WTC11 (cell line): ENCODE measurements at regions of chr17 and their contacts with region 1.

Region 1: DNA sequence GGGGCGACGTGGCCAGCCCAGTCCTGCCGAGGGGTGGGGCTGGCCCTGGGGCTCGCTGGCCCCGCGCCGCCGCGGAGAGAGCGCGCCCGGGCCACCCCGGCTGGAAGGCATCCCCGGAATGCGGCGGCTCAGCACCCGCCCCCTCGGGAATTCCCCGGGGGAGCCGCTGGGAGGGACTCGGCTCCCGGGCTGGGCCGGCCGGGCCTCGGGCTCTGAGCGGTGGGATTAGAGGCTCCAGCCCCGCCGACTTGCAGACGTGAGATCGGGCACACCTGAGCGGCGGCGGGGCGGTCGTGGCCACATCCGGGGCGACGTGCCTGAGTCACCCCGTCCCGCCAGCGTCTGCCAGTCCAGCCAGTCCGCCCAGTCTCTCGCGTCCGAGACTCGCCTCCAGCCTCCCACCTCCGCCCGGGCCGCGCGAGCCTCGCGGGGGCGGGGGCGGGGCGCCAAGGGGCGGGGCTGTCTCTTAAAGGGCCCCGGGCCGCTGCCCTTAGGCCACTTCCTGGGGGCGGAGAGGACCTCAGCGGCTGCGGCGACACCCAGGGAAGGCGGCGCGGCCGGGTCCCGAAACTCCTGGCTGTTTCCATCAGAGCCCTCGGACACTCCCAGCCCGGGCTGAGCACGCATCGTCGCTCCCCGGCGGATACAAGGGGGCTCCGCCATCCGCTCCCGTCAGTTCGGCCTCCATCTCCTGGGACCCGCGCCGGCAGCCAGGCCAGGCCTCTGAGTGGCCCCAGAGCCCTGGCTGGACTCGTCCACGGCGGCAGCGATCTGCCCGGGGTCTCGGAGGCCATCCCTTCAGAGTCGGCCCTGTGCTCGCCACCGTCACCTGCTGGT is at the start of gene KCTD11:
- DNase-seq: peak; percentile 89
- ATAC-seq: peak; percentile 38
- H3K4me3 Mint-ChIP-seq: peak within 1 kb of the TSS; percentile 81
- H3K27ac Mint-ChIP-seq: peak within 1 kb of the TSS; percentile 60; the same call in 1 of the 2 replicates
- H3K4me1 Mint-ChIP-seq: peaks cover 33% of the 10 kb centered on the region
- H3K27me3 Mint-ChIP-seq: peaks cover 7% of the 10 kb centered on the region
- CTCF ChIP-seq: no peak
- total RNA-seq, gene KCTD11: 8.1 to 9.0 TPM (median 8.2 TPM) in 3 replicates

Region 2: GRCh38 chr17:6981426-6981825 is 370.5 kb before region 1 on chr17:
- CTCF ChIA-PET with region 1: no interaction called
- POLR2A ChIA-PET with region 1: no interaction called
- DNase-seq: no peak
- ATAC-seq: no peak
- H3K4me3 Mint-ChIP-seq: no peak overlapping the region
- H3K27ac Mint-ChIP-seq: no peak overlapping the region
- H3K4me1 Mint-ChIP-seq: peaks cover 4% of the 10 kb centered on the region
- H3K27me3 Mint-ChIP-seq: peaks cover 25% of the 10 kb centered on the region
- CTCF ChIP-seq: no peak

Region 3: DNA sequence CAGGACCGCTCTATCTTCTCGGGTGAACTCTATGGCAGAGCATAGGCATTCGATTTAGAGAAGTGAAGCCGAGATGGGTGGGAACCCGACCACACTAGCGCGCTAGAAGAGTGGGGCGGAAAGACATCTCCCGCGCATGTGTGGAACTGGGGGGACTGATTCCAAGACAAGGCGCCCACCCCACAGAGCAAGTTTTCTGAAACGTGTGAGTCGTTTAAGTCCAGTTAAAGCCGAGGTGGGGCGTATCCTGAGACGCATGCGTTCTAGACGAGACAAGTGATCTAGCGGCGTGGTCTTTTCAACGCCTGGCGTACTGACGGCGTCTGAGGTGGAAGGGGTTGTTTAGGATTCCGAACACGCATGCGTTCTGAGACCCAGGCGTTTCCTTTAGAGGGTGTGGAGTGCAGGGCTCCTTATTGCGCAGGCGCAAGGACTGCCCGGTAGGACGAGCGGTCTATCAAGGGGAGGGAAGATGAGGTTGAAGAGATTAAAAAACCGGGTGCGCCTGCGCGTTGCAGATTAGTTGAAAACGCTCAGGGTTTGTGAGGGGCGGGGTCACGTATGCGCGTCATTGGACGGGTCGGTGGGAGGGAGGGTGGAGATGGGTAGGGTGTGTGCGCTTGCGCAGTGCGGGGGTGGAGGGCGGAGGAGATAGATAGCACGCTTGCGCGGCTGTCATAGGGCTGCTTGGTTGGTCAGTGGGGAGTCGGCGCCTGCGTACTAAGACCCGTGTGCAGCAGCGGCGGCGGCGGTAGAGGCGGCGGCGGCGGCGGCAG is 44.8 kb before region 1 on chr17 and contains the start of gene EIF5A:
- CTCF ChIA-PET with region 1: no interaction called
- POLR2A ChIA-PET with region 1: no interaction called
- DNase-seq: peak; percentile 100
- ATAC-seq: peak; percentile 87
- H3K4me3 Mint-ChIP-seq: peak within 1 kb of the TSS; percentile 89
- H3K27ac Mint-ChIP-seq: peak within 1 kb of the TSS; percentile 99
- H3K4me1 Mint-ChIP-seq: peaks cover 26% of the 10 kb centered on the region
- H3K27me3 Mint-ChIP-seq: peaks cover 15% of the 10 kb centered on the region
- CTCF ChIP-seq: no peak
- total RNA-seq, gene EIF5A: 929 to 1,021 TPM (median 936 TPM) in 3 replicates

Region 4: DNA sequence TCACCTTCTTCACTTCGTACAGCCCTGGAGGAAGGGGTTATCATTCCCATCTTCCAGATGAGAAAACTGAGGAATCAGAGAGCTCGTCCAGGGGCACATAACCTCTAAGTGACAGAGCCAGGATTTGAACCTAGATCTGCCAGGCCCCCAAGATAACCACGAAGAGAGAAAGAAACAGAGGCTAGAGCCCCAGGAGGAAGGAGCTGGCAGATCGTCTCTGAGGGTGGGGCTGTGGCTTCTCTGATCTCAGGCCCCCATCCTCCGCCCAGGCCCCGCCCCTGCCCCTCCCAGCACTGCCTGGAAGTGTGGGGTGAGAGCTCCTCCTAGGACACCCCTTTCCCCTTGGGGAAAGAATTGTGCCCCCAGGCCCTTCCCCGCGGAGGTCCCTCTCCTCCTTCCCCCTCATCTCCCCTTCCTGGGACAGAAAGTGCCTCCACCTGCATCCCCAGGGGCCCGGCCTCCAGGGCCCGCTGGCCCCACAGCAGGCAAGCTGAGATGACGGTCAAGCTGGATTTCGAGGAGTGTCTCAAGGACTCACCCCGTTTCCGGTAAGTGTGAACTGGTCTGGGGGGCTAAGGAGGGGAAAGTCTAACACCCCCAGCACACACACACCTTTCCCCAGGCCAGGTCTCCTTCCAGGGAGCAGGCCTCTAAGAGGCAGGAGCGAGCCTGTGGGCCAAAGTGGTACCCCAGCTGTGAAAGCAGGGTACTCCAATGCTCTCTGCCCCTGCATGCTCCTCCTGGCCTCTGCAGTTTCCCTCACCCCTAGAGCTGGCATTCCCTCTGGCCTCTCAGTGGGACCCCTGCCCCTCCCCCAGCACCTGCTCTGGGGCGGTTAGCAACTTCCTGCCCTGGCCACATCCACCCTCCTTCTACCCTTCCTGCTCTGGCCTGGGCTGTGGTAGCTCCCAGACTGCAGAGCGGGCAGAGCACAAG is 15.4 kb before region 1 on chr17 and contains the start of gene ACAP1:
- CTCF ChIA-PET with region 1: interaction called, 14 read pairs
- POLR2A ChIA-PET with region 1: interaction called, 22 read pairs
- DNase-seq: peak; percentile 78
- ATAC-seq: peak; percentile 96
- H3K4me3 Mint-ChIP-seq: peak within 1 kb of the TSS; percentile 63
- H3K27ac Mint-ChIP-seq: peak within 1 kb of the TSS; percentile 98
- H3K4me1 Mint-ChIP-seq: peaks cover 34% of the 10 kb centered on the region
- H3K27me3 Mint-ChIP-seq: no peaks in the 10 kb centered on the region
- CTCF ChIP-seq: no peak
- total RNA-seq, gene ACAP1: 58.6 to 63.9 TPM (median 60.6 TPM) in 3 replicates

Region 5: GRCh38 chr17:7383742-7384488 is 32.0 kb after region 1 on chr17:
- CTCF ChIA-PET with region 1: interaction called, 16 read pairs
- POLR2A ChIA-PET with region 1: no interaction called
- DNase-seq: peak; percentile 87
- ATAC-seq: peak; percentile 85
- H3K4me3 Mint-ChIP-seq: peak overlapping the region; percentile 58
- H3K27ac Mint-ChIP-seq: no peak overlapping the region
- H3K4me1 Mint-ChIP-seq: peaks cover 26% of the 10 kb centered on the region
- H3K27me3 Mint-ChIP-seq: peaks cover 45% of the 10 kb centered on the region
- CTCF ChIP-seq: no peak

Region 6: DNA sequence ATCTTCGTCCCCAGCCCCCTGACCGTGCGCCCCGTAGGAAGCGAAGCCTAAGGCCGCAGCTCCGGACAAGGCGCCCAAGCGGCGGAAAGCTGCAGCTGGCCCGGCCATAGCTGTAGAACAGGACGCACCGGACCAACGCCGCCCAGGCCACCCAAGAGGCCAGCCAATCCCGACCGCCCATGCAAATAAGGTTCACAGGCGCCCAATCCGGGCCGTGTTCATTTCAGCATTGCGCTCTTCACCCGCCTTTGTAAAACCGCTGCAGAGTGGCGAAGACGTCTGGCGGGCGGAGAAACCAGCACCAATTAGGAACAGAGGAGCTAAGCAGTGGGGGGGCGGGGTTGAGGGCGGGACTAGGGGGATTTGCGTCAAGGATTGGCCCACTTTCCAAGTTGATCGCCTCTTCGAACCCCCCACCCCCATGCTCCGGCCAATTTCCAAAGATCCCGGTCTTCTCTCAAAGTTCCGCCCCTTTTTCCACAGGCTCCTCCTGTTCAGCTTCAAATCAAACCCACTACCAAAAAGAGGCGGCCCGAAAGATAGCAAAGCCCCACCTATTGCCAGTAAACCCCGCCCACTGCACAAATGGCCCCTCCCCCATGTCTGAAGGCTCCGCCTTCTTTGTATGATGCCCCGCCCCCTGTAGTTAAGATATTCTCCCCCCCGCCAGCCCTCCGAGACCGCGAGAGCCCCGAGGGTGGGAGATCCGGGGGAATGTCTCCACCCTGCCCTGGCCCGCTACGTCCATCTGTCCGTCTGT is 52.3 kb after region 1 on chr17 and contains the start of gene TMEM256:
- CTCF ChIA-PET with region 1: interaction called, 24 read pairs
- POLR2A ChIA-PET with region 1: interaction called, 10 read pairs
- DNase-seq: peak; percentile 99
- ATAC-seq: peak; percentile 87
- H3K4me3 Mint-ChIP-seq: peak within 1 kb of the TSS; percentile 84
- H3K27ac Mint-ChIP-seq: peak within 1 kb of the TSS; percentile 85
- H3K4me1 Mint-ChIP-seq: peaks cover 29% of the 10 kb centered on the region
- H3K27me3 Mint-ChIP-seq: no peaks in the 10 kb centered on the region; the same call in 1 of the 2 replicates
- CTCF ChIP-seq: no peak
- total RNA-seq, gene TMEM256: 132 to 180 TPM (median 178 TPM) in 3 replicates

Region 7: GRCh38 chr17:7444682-7445618 is 93.1 kb after region 1 on chr17 and contains the start of gene CHRNB1:
- CTCF ChIA-PET with region 1: interaction called, 13 read pairs
- POLR2A ChIA-PET with region 1: interaction called, 3 read pairs
- DNase-seq: peak; percentile 93
- ATAC-seq: peak; percentile 75
- H3K4me3 Mint-ChIP-seq: peak within 1 kb of the TSS; percentile 87
- H3K27ac Mint-ChIP-seq: peak within 1 kb of the TSS; percentile 99
- H3K4me1 Mint-ChIP-seq: peaks cover 33% of the 10 kb centered on the region
- H3K27me3 Mint-ChIP-seq: peaks cover 39% of the 10 kb centered on the region
- CTCF ChIP-seq: no peak
- total RNA-seq, gene CHRNB1: 16.0 to 21.5 TPM (median 20.8 TPM) in 3 replicates